CD8-positive, alpha-beta T cell (primary cell): ENCODE measurements at regions of chr2 and their contacts with region 1.

Region 1: DNA sequence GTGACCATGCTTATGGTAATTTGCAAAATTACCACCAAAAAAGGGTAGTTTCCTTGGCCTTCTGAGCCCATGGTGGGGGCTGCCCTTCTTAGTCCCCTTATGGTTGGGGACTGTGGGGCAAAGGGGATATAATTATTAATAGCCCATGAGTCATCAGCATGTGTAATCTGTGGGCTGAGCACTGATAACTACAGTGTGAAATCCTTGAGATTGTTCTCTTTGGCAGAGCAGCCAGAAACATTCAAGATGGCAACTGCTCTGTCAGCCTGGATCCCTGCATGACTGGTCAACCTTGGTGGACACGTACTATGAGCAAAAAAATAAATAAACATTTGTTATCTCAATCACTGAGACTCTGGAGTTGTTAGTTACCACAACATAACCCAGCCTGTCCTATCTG is 61.3 kb downstream of the MGAT4A start:
- DNase-seq: no peak
- ATAC-seq: no peak
- H3K4me3 ChIP-seq: no peak overlapping the region
- H3K4me3 Mint-ChIP-seq: no peak overlapping the region
- H3K27ac ChIP-seq: no peak overlapping the region
- H3K27ac Mint-ChIP-seq: peak overlapping the region; percentile 20
- H3K4me1 ChIP-seq: peaks cover 31% of the 10 kb centered on the region
- H3K4me1 Mint-ChIP-seq: peaks cover 72% of the 10 kb centered on the region
- H3K27me3 ChIP-seq: no peaks in the 10 kb centered on the region
- H3K27me3 Mint-ChIP-seq: no peaks in the 10 kb centered on the region
- CTCF ChIP-seq: no peak

Region 2: DNA sequence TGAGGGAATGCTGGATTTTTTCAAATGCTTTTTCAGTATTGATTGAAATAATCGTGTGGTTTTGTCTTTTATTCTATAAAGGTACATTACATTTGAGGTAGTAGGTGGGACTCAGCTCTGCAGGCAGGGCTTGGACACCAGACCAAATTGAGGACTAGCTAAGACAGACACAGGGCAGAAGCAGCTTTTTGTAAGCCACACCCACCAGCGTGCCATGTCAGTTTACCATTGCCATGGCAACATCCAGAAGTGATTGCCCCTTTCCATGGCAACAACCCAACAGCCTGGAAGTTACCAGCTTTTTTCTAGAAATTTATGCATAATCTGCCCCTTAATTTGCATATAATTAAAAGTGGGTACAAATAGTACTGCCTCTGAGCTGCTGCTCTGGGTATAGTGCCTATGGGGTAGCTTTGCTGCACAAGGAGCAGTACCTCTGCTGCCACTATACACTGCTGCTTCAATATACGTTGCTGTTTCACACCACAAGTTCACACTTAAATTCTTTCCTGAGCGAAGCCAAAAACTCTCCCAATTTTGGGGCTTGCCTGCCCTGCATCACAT is 606.3 kb before region 1 on chr2:
- CTCF ChIA-PET with region 1: no interaction called
- POLR2A ChIA-PET with region 1: no interaction called
- intact Hi-C with region 1: no loop called
- DNase-seq: no peak
- ATAC-seq: no peak
- H3K4me3 ChIP-seq: no peak overlapping the region
- H3K4me3 Mint-ChIP-seq: no peak overlapping the region
- H3K27ac ChIP-seq: no peak overlapping the region
- H3K27ac Mint-ChIP-seq: no peak overlapping the region
- H3K4me1 ChIP-seq: no peaks in the 10 kb centered on the region
- H3K4me1 Mint-ChIP-seq: no peaks in the 10 kb centered on the region
- H3K27me3 ChIP-seq: no peaks in the 10 kb centered on the region
- H3K27me3 Mint-ChIP-seq: peaks cover 18% of the 10 kb centered on the region
- CTCF ChIP-seq: no peak

Region 3: DNA sequence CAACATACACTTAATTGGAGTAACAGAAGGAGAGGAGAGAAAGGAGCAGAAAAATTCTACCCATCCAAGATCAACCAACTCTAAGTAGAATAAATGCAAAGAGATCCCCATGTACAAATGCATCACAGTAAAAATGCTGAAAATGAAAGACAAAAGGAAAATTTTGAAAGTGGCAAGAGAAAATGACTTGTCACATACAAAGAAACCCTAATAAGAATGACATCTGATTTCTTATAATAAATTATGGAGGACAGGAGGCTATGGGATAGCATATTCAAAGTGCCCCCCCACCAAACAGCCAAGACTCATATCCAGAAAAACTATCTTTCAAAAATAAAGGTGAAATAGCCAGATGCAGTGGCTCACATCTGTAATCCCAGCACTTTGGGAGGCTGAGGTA is 247.2 kb before region 1 on chr2:
- CTCF ChIA-PET with region 1: no interaction called
- POLR2A ChIA-PET with region 1: no interaction called
- intact Hi-C with region 1: no loop called
- DNase-seq: no peak
- ATAC-seq: no peak
- H3K4me3 ChIP-seq: no peak overlapping the region
- H3K4me3 Mint-ChIP-seq: no peak overlapping the region
- H3K27ac ChIP-seq: no peak overlapping the region
- H3K27ac Mint-ChIP-seq: no peak overlapping the region
- H3K4me1 ChIP-seq: no peaks in the 10 kb centered on the region
- H3K4me1 Mint-ChIP-seq: no peaks in the 10 kb centered on the region
- H3K27me3 ChIP-seq: no peaks in the 10 kb centered on the region
- H3K27me3 Mint-ChIP-seq: no peaks in the 10 kb centered on the region
- CTCF ChIP-seq: no peak

Region 4: DNA sequence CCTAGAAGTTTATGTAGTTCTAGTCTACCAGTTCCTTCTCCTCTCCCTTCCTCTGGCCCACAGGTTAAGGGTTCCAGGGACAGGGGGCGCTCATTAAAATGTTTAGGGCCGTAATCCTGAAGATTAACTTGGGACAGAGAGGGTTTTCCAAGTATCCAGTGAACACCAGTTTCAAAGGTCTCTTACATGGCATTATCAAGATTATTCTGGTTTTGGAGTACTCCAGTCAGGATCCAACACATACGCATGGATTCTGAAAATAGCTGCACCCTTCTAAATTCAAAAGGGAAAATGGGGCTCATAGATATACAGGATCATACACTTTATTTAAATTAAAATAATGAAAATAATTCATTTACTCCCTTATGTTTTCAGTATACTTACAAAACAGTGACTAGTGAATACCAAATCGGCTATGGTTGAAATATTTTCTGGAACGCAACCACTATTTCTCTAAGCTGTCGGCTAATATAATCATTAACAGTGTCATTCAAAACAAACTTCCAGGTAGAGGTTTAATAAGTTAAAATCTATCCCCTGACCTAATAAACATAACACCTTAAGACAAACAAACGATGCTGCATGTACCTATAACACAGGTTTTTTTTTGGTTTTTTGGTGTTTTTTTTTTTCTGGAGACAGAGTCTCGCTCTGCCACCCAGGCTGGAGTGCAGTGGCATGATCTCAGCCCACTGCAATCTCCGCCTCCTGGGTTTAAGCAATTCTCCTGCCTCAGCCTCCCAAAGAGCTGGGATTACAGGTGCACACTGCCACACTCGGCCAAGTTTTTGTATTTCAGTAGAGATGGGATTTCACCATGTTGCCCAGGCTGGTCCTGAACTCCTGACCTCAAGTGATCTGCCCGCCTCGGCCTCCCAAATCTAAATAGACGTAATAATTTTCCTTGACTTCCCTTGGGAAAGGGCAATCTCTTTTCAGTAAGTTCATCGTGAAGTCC is 16.5 kb after region 1 on chr2:
- CTCF ChIA-PET with region 1: no interaction called
- POLR2A ChIA-PET with region 1: interaction called, 4 read pairs
- intact Hi-C with region 1: loop called (anchors 2 kb)
- DNase-seq: no peak
- ATAC-seq: no peak
- H3K4me3 ChIP-seq: no peak overlapping the region
- H3K4me3 Mint-ChIP-seq: no peak overlapping the region
- H3K27ac ChIP-seq: no peak overlapping the region
- H3K27ac Mint-ChIP-seq: peak overlapping the region; percentile 94
- H3K4me1 ChIP-seq: peaks cover 75% of the 10 kb centered on the region
- H3K4me1 Mint-ChIP-seq: peaks cover 87% of the 10 kb centered on the region
- H3K27me3 ChIP-seq: no peaks in the 10 kb centered on the region
- H3K27me3 Mint-ChIP-seq: no peaks in the 10 kb centered on the region
- CTCF ChIP-seq: no peak